ENCODE measurements at regions of chr11 and their contacts with region 1.

Region 1: DNA sequence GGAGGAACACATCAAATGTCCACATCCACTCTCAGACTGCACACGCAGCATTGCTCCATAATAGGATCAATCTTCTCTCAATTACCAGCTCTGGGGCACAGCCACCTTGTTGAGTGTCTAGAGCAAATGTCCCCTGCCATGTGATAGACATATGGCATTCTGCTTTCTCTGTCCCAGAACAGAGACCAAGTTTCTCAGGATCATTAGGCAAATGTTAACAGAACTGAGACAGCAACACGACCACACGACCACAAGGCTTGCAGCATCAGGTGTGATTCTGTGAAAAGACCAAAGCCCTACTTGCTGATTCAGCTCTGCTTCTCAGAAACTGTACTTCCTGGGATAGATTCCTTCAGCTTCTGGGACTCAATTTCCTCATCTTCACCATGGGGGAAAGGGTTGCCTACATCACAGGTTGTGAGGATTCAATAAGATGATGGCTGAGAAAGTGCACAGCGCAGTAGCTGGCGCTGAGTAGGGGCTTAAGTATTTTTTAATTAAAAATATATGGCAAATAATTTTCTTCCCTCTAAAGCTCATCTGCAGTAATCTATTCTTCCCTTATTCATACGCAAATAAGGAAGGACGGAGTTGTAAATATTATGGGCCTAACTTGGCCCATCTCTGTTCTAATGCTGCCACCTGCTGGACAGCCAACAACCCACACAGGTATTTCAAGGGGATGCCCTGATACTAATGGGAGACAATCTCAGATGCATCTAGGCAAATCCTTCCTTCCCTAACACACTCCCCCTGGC is 54.3 kb upstream of the USP47 start:
- DNase-seq: peak; percentile 55 to 78 (median 62)
- ATAC-seq: peak; percentile 53 to 93 (median 87)
- H3K4me3 ChIP-seq: no peak overlapping the region
- H3K27ac ChIP-seq: no peak overlapping the region
- H3K4me1 ChIP-seq: peaks cover 0 to 6% (median 0%) of the 10 kb centered on the region in 12 donors
- H3K27me3 ChIP-seq: no peaks in the 10 kb centered on the region
- CTCF ChIP-seq: peak; percentile 81 to 97 (median 87)
- POLR2A ChIP-seq: no peak

Region 2: DNA sequence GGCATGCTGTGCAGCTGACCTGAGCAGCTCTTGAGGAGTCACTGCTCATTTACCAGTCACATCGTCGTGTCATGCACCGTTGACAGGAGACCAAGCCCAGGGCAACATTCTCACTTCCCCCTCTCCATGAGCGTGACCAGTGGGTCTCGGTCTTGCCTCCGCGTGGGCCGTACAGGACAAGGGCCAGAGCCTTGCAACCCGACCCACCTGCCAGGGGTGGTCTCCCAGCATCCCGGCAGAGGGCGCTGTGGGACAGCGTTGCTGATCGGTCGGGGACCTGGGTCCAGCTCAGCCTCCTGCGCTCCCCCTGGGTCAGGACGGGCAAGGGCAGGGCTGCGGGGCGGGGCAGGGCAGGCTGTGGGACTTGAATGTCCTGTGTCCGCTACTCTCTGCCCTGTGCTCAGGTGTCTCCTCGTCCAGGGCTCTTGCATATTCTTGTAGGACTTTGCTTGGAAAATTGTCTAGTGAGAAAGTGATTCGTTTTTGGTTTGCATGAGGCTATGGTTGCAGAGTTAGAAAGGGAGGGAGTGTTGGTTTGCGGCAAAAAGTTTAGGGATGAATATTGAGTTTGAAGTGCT is 995.0 kb before region 1 on chr11:
- intact Hi-C with region 1: loop called in 7 of 10 experiments (anchors 5 to 10 kb)
- DNase-seq: peak; percentile 87 to 94 (median 92)
- ATAC-seq: peak; percentile 91 to 96 (median 92)
- H3K4me3 ChIP-seq: peak overlapping the region in 5 of 12 donors; percentile 3 to 41 (median 10)
- H3K27ac ChIP-seq: no peak overlapping the region
- H3K4me1 ChIP-seq: peaks cover 0 to 17% (median 5%) of the 10 kb centered on the region in 12 donors
- H3K27me3 ChIP-seq: no peaks in the 10 kb centered on the region
- CTCF ChIP-seq: peak; percentile 85 to 98 (median 92)
- POLR2A ChIP-seq: no peak

Region 3: DNA sequence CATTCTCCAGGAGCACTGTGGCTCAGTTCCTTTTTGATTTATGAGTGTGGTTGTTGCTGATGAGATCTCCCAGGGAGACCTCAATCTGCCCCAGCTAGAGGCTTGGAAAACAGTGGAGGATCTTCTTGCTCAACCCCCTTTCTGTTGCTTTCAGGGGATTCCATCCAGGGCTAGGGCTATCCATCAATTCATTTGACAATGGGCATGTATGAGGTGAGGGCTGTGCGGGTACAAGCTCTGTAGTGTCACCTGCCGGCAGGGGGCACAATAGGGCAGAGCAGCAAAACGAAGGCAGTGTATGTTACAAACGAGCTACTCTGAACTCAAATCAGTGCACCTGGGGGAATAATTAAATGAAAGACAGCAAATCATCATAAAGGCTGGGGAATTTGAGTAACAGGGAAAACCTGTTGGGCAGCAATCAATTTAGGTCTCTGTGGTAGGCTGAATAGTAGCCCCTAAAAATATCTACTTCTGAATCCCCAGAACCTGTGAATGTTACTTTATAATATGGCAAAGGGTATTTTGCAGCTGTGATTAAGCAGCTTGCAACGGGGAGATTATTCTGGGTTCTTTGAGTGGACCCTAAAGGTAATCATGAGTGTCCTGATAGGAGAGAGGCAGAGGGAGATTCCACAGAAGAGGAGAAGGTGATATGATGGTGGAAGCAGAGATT is 759.3 kb before region 1 on chr11:
- intact Hi-C with region 1: loop called in 7 of 10 experiments (anchors 1 to 2 kb)
- DNase-seq: peak; percentile 45 to 79 (median 55)
- ATAC-seq: peak in 3 of 4 donors; percentile 69 to 89 (median 71)
- H3K4me3 ChIP-seq: no peak overlapping the region
- H3K27ac ChIP-seq: no peak overlapping the region
- H3K4me1 ChIP-seq: no peaks in the 10 kb centered on the region
- H3K27me3 ChIP-seq: peaks cover 0 to 4% (median 0%) of the 10 kb centered on the region in 9 donors
- CTCF ChIP-seq: peak; percentile 66 to 82 (median 75)
- POLR2A ChIP-seq: no peak

Region 4: GRCh38 chr11:11265994-11266606 is 521.4 kb before region 1 on chr11:
- intact Hi-C with region 1: loop called in 2 of 10 experiments (anchors 10 kb)
- DNase-seq: peak in 1 of 5 donors; percentile 37
- ATAC-seq: peak in 3 of 4 donors; percentile 58 to 73 (median 66)
- H3K4me3 ChIP-seq: no peak overlapping the region
- H3K27ac ChIP-seq: no peak overlapping the region
- H3K4me1 ChIP-seq: peaks cover 0 to 13% (median 6%) of the 10 kb centered on the region in 12 donors
- H3K27me3 ChIP-seq: no peaks in the 10 kb centered on the region
- CTCF ChIP-seq: peak; percentile 62 to 87 (median 78)
- POLR2A ChIP-seq: no peak

Region 5: GRCh38 chr11:11400635-11401232 is 386.8 kb before region 1 on chr11:
- intact Hi-C with region 1: loop called in 4 of 10 experiments (anchors 5 to 10 kb)
- DNase-seq: no peak
- ATAC-seq: no peak
- H3K4me3 ChIP-seq: no peak overlapping the region
- H3K27ac ChIP-seq: no peak overlapping the region
- H3K4me1 ChIP-seq: peaks cover 0 to 43% (median 10%) of the 10 kb centered on the region in 12 donors
- H3K27me3 ChIP-seq: no peaks in the 10 kb centered on the region
- CTCF ChIP-seq: peak in 7 of 12 donors; percentile 6 to 36 (median 19)
- POLR2A ChIP-seq: no peak

Region 6: DNA sequence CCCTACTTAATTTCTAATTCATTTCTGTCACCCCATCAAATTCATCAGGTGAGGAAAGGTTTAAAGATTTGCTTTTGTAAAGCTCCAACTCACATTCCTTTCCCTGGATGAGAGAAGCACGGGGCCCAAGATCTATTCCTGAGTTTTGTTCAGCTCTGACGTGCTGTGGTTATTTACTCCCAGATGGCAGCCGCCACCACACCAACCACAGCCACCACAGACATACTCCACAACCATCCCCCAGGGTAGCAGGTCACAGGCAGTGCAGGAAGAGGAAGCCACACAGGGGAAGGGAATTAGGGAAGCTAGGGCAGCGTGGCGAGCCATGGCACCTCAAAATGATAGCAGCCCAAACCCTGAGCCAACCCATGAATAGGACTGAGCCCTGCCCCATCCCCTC is 371.0 kb before region 1 on chr11:
- intact Hi-C with region 1: loop called in 1 of 10 experiments (anchors 10 kb)
- DNase-seq: peak in 1 of 5 donors; percentile 32
- ATAC-seq: peak in 3 of 4 donors; percentile 25 to 44 (median 28)
- H3K4me3 ChIP-seq: no peak overlapping the region
- H3K27ac ChIP-seq: no peak overlapping the region
- H3K4me1 ChIP-seq: peaks cover 0 to 43% (median 30%) of the 10 kb centered on the region in 12 donors
- H3K27me3 ChIP-seq: peaks cover 0 to 6% (median 0%) of the 10 kb centered on the region in 9 donors
- CTCF ChIP-seq: no peak
- POLR2A ChIP-seq: no peak

Region 7: DNA sequence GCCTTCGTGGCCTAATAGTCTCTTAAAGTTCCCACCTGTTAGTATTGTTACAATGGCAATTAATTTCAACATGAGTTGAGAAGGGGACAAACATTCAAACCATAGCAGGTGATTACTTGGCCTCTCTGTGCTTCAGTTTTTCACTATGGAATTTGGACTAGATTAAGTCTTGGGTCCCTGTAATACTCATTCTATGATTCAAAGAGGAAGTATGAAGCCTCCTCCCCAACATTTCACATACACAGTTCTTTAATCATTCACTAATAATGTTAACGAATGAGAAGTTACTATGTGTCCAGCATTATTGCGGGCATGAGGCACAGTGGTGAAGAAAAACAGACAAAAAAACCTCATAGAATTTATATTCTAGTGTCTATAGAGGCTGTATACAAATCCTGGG is 34.4 kb after region 1 on chr11:
- intact Hi-C with region 1: no loop called
- DNase-seq: no peak
- ATAC-seq: no peak
- H3K4me3 ChIP-seq: no peak overlapping the region
- H3K27ac ChIP-seq: no peak overlapping the region
- H3K4me1 ChIP-seq: peaks cover 0 to 2% (median 0%) of the 10 kb centered on the region in 12 donors
- H3K27me3 ChIP-seq: no peaks in the 10 kb centered on the region
- CTCF ChIP-seq: no peak
- POLR2A ChIP-seq: no peak